HepG2 (cell line): ENCODE measurements at regions of chr2 and their contacts with region 1.

Region 1: DNA sequence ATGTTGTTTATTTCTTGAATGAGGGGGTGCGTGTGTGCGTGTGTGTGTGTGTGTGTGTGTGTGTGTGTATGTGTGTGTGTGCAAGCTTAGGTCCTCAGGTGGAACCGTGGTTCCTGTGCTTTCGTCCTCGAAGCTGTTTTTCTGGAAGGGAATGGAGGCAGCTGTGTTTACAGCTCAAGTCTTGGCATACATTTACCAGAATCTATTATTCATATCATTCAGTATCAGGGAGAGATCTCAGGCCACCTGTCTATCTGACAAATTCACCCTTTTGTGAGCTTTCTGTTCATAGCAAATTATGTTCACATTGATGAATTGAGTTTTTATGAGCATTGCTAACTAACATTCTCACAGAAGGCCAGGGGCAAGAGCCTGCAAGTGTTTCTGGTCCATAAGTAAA is 550.4 kb downstream of the ARHGAP15 start:
- DNase-seq: no peak
- ATAC-seq: no peak
- H3K4me3 ChIP-seq: no peak overlapping the region
- H3K27ac ChIP-seq: no peak overlapping the region
- H3K4me1 ChIP-seq: no peaks in the 10 kb centered on the region
- H3K27me3 ChIP-seq: no peaks in the 10 kb centered on the region
- CTCF ChIP-seq: no peak
- EP300 ChIP-seq: no peak
- POLR2A ChIP-seq: no peak
- RAD21 ChIP-seq: no peak

Region 2: GRCh38 chr2:141703501-141703900 is 1976.1 kb before region 1 on chr2:
- CTCF ChIA-PET with region 1: no interaction called
- POLR2A ChIA-PET with region 1: no interaction called
- in situ Hi-C with region 1: no loop called
- intact Hi-C with region 1: loop called (anchors 5 kb)
- DNase-seq: no peak
- ATAC-seq: no peak
- H3K4me3 ChIP-seq: no peak overlapping the region
- H3K27ac ChIP-seq: no peak overlapping the region
- H3K4me1 ChIP-seq: no peaks in the 10 kb centered on the region
- H3K27me3 ChIP-seq: no peaks in the 10 kb centered on the region
- CTCF ChIP-seq: no peak
- EP300 ChIP-seq: no peak
- POLR2A ChIP-seq: no peak
- RAD21 ChIP-seq: no peak

Region 3: DNA sequence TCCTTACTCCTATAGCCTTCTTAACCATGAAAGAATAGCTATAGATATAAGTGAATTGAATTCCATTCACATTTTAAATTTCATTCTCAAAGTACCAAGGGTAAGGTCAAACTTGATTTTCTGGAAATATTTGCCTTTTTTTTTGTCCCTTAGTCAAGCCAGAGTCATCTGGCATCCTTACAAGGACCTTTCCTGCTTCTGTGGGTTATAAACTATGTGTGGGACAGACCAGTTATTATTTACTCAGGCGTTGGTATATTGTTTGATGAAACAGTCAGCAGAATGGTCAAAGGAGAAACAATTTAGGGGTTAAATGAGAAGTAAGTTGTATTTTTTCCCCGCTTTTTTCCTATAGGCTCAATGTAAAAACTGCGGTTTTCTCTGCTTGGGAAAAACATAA is 1943.5 kb after region 1 on chr2:
- CTCF ChIA-PET with region 1: no interaction called
- POLR2A ChIA-PET with region 1: no interaction called
- in situ Hi-C with region 1: no loop called
- intact Hi-C with region 1: no loop called
- DNase-seq: no peak
- ATAC-seq: no peak
- H3K4me3 ChIP-seq: no peak overlapping the region
- H3K27ac ChIP-seq: no peak overlapping the region
- H3K4me1 ChIP-seq: no peaks in the 10 kb centered on the region
- H3K27me3 ChIP-seq: no peaks in the 10 kb centered on the region; a peak in 1 of 5 replicates
- CTCF ChIP-seq: no peak
- EP300 ChIP-seq: no peak
- POLR2A ChIP-seq: no peak
- RAD21 ChIP-seq: no peak